Caco-2 (cell line): ENCODE measurements at regions of chrX and their contacts with region 1.

Region 1: DNA sequence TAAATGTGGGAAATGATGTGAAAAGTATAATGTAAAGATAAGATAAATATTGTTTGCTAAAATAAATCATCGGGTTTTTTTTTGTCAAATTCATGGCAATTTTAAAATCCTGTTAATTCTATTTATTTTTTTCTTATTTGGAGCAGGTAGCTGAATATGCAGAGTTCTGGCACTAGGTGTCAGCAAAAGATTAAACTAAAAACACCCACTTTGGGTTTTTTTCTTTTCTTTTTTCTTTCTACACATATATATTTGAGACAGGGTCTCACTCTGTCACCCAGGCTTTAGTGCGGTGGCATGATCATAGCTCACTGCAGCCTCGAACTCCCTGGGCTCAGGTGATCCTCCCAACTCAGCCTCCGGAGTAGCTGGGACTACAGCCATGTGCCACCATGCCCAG is 6.9 kb upstream of the RAP2C start:
- DNase-seq: no peak
- H3K4me3 ChIP-seq: no peak overlapping the region
- H3K4me3 Mint-ChIP-seq: no peak overlapping the region
- H3K27ac Mint-ChIP-seq: no peak overlapping the region
- H3K4me1 ChIP-seq: no peaks in the 10 kb centered on the region
- H3K4me1 Mint-ChIP-seq: peaks cover 10% of the 10 kb centered on the region
- H3K27me3 ChIP-seq: no peaks in the 10 kb centered on the region
- H3K27me3 Mint-ChIP-seq: no peaks in the 10 kb centered on the region
- CTCF ChIP-seq: peak; percentile 32 to 34

Region 2: DNA sequence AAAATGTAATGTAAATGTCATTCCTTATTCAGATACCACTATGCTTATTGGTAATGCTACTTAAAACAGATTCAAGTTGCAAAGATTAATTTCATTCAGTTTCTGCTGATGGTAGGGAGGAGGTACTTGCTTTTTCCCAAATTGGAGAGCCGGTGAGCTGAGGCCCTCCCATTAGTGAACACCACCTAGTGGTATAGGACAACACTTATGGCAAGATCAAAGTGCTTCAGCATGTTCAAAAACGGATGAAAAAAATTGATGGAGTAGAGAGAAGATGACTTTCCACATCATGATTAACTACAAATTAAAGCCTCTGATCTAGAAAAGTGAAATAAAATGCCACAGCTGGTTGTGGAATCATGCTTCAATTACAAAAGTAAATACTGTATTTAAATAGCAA is 149.8 kb after region 1 on chrX:
- CTCF ChIA-PET with region 1: no interaction called
- POLR2A ChIA-PET with region 1: no interaction called
- intact Hi-C with region 1: loop called (anchors 10 kb)
- DNase-seq: no peak
- H3K4me3 ChIP-seq: no peak overlapping the region
- H3K4me3 Mint-ChIP-seq: no peak overlapping the region
- H3K27ac Mint-ChIP-seq: no peak overlapping the region
- H3K4me1 ChIP-seq: peaks cover 19% of the 10 kb centered on the region
- H3K4me1 Mint-ChIP-seq: no peaks in the 10 kb centered on the region
- H3K27me3 ChIP-seq: no peaks in the 10 kb centered on the region
- H3K27me3 Mint-ChIP-seq: no peaks in the 10 kb centered on the region
- CTCF ChIP-seq: peak in 1 of 2 experiments; percentile 26

Region 3: GRCh38 chrX:132463411-132463810 is 237.2 kb after region 1 on chrX:
- CTCF ChIA-PET with region 1: no interaction called
- POLR2A ChIA-PET with region 1: no interaction called
- intact Hi-C with region 1: loop called (anchors 2 kb)
- DNase-seq: peak in 1 of 2 experiments; percentile 5
- H3K4me3 ChIP-seq: no peak overlapping the region
- H3K4me3 Mint-ChIP-seq: no peak overlapping the region
- H3K27ac Mint-ChIP-seq: no peak overlapping the region
- H3K4me1 ChIP-seq: no peaks in the 10 kb centered on the region
- H3K4me1 Mint-ChIP-seq: no peaks in the 10 kb centered on the region
- H3K27me3 ChIP-seq: no peaks in the 10 kb centered on the region
- H3K27me3 Mint-ChIP-seq: no peaks in the 10 kb centered on the region
- CTCF ChIP-seq: peak; percentile 35 to 42

Region 4: DNA sequence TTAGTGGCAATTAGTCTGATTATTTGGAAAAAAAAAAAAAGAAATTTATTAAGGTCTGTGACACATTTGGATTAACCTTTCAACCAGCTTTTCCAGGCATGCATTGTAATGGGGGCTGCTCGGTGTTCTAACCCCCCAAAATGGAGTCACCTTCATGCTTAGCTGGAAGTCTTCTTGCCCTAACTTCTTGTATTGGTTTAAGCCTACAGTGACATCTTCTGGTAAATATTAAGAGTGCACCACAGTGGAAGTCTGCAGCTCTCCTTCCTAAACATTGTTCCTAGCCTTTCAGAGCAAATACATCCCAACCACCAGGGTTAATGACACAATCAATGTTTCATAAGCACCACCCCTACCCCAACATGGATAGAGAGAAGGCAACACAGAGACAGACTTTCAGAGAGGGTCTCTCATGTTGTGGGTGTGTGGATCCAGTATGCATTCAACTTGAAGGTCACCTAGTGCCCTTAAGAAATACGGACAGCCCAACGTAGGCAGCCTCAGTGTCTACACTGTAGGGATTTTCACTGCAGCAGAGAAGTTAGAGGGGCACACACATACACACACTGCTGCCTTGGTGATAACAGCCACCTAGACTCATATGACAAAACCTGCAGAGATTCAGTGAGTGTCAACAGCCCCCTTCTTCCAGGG is 405.5 kb after region 1 on chrX:
- CTCF ChIA-PET with region 1: interaction called, 6 read pairs
- POLR2A ChIA-PET with region 1: no interaction called
- intact Hi-C with region 1: loop called (anchors 1 kb)
- DNase-seq: peak in 1 of 2 experiments; percentile 16
- H3K4me3 ChIP-seq: no peak overlapping the region
- H3K4me3 Mint-ChIP-seq: no peak overlapping the region
- H3K27ac Mint-ChIP-seq: no peak overlapping the region
- H3K4me1 ChIP-seq: no peaks in the 10 kb centered on the region
- H3K4me1 Mint-ChIP-seq: no peaks in the 10 kb centered on the region
- H3K27me3 ChIP-seq: no peaks in the 10 kb centered on the region
- H3K27me3 Mint-ChIP-seq: no peaks in the 10 kb centered on the region
- CTCF ChIP-seq: peak; percentile 32 to 35